ENCODE measurements at regions of chr17 and their contacts with region 1.

Region 1: DNA sequence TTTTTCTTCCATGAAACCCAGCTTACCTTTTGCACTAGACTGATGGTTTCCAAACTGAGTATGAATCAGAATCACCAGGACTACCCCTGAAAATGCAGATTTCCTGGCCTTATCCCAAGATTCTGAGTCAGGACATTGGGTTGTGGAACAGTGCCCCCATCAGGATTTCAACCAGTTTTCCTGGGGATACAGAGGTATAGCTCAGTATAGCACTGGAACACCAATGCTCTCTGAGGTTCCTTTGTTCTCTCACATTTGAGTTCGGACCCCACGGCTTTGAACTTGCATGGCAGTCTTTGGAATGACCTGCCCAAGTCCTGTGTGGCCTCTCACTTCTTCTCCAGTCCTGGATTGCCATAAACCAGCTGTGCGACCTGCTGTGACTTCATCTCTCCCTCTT is 12.8 kb upstream of the CCL8 start:
- DNase-seq: no peak
- ATAC-seq: peak; percentile 73

Region 2: DNA sequence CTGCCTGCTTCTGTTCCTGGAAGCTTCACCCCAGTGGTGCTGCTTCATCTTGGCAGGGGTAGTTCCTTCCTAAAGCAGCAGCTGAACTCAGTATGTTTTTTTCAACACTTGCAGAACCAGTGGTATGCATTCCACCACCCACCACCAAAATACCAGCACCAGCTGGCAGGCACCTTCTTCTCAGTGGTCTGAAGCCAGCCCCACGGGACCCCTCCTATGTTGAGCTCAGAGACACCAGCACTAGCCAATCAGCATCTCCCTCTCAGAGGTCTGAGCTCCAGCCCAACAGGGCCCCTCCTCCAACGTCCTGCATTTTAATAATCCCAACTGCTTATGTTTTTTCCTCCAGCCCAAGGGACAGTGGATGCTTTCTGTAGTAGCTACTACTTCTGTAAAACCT is 351.0 kb before region 1 on chr17:
- intact Hi-C with region 1: no loop called
- DNase-seq: no peak
- ATAC-seq: no peak

Region 3: DNA sequence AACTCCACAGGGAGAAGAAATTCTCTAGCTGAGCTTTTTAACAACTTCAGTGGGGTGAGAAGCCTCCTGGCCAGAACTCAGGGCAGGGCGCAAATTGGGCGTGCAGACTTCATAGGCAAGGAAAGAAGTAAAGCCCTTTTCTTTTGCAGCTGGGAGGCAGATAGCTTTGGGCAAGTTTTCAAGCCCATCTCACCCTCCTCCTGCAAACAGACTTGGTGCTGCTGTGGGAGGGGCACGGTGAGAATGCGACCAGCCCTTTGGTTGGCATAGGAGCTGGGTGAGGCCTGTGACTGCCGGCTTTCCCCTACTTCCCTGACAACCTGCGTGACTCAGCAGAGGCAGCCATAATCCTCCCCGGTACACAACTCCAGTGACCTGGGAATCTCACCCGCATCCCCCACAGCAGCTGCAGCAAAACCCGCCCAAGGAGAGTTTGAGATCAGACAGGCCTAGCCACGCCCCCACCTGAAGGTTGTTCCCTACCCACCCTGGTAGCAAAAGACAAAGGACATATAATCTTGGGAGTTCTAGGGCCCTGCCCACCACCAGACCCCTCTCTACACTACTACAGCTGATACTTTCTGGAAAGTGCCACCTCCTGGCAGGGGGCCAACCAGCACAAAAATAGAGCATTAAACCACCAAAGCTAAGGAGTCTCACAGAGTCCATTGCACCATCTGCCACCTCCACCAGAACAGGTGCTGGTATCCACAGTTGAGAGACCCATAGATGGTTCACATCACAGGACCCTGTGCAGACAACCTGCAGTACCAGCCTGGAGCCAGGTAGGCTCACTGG is 246.8 kb before region 1 on chr17:
- intact Hi-C with region 1: no loop called
- DNase-seq: no peak
- ATAC-seq: no peak

Region 4: GRCh38 chr17:34199932-34200534 is 106.4 kb before region 1 on chr17:
- intact Hi-C with region 1: loop called (anchors 2 kb)
- DNase-seq: peak; percentile 59
- ATAC-seq: peak; percentile 90

Region 5: GRCh38 chr17:34241062-34241461 is 65.4 kb before region 1 on chr17:
- intact Hi-C with region 1: loop called (anchors 2 kb)
- DNase-seq: peak; percentile 89
- ATAC-seq: peak; percentile 88

Region 6: DNA sequence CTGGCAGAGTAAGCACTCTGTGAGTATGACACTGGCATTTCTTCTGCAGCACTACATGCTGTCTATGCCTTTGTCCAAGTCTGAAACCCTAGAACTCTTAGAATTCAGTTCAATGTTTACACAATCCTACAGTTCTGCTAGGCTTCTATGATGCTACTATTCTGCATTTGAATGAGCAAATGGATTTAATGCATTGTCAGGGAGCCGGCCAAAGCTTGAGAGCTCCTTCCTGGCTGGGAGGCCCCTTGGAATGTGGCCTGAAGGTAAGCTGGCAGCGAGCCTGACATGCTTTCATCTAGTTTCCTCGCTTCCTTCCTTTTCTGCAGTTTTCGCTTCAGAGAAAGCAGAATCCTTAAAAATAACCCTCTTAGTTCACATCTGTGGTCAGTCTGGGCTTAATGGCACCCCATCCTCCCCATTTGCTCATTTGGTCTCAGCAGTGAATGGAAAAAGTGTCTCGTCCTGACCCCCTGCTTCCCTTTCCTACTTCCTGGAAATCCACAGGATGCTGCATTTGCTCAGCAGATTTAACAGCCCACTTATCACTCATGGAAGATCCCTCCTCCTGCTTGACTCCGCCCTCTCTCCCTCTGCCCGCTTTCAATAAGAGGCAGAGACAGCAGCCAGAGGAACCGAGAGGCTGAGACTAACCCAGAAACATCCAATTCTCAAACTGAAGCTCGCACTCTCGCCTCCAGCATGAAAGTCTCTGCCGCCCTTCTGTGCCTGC is 51.6 kb before region 1 on chr17 and contains the start of gene CCL2:
- intact Hi-C with region 1: loop called (anchors 5 kb)
- DNase-seq: peak; percentile 82
- ATAC-seq: peak; percentile 71
- total RNA-seq, gene CCL2: 33.4 TPM

Region 7: GRCh38 chr17:34285286-34285792 is 21.1 kb before region 1 on chr17 and contains the start of gene CCL11:
- intact Hi-C with region 1: loop called (anchors 2 kb)
- DNase-seq: no peak
- ATAC-seq: peak; percentile 86
- total RNA-seq, gene CCL11: 5.4 TPM

Region 8: GRCh38 chr17:34361478-34362061 is 55.1 kb after region 1 on chr17:
- intact Hi-C with region 1: loop called (anchors 5 kb)
- DNase-seq: peak; percentile 94
- ATAC-seq: peak; percentile 90

Region 9: GRCh38 chr17:34378664-34379101 is 72.2 kb after region 1 on chr17:
- intact Hi-C with region 1: no loop called
- DNase-seq: no peak
- ATAC-seq: no peak

Region 10: GRCh38 chr17:34420254-34420766 is 113.8 kb after region 1 on chr17:
- intact Hi-C with region 1: no loop called
- DNase-seq: no peak
- ATAC-seq: no peak